ENCODE measurements at regions of chr9 and their contacts with region 1.

Region 1: DNA sequence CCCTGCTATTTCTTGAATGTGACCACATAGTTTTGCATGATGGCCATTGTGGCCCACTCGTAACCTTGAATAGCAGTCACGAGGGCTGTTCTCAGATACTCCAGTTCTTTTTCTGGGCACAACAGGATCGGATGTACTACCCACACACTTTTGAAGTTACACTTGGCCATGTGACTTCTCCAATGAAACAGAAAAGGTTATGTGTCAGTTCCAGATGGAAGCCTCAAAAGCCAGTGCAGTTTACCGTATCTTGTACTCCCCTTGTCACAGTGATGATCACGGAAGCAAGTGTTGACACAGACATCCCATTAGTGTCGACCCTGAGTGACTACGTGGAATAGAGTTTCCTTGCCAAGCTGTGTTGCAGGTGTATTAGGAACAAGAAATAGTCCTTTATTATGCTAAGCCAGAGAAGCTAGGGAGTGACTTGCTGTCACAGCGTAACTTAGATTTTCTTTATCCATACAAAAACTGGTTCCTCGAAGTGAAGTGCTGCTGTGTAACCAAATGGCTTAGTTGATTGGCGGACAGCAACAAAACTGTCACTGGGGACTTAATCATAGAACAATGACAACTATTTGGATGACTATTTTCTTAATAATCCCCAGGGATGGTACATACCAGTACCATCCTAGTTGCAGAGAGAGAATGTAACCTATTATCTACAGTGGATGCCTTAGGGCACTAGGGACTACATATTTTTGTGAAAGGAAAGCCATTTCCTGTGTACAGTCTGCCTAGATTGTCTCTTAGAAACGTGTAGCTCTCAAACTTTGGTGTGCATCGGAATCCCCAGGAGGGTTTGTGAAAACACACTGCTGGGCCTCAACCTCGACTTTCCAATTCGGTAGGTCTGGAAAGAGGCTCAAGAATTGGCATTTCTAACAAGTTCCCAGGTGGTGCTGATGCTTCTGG is 90.1 kb upstream of the DMRT1 start:
- DNase-seq: peak; percentile 56
- H3K4me3 ChIP-seq: no peak overlapping the region
- H3K27ac ChIP-seq: peak overlapping the region; percentile 92
- H3K4me1 ChIP-seq: peaks cover 70% of the 10 kb centered on the region
- H3K27me3 ChIP-seq: no peaks in the 10 kb centered on the region
- CTCF ChIP-seq: no peak

Region 2: DNA sequence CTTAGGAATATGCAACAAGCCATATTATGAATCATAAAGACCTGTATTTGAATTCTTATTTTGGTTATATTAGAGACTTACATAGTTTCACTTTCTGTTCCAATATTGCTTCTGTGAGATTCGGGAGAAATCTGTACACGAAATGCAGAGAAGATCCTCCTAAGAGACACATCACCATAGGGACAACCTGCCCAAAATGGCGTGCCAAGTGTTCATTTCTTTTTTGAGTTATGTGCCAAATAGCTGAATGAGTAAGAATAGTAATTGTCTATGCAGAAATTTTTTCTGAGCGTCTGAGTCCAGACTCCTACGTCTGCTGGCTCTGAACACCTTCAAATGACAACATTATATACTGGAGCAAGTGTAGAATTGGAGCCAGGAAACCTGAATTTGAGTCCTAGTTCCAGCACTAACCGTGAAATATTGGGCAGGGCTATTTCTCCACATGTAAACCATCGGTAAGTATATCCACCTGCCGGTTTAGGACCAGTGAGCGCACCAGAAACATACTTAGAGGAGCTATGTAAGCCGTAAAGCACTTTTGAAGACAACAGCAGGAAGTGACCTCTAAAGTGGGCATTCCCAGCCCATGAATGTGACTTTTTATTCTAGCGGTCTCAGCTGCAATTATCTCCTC is 73.8 kb before region 1 on chr9:
- CTCF ChIA-PET with region 1: no interaction called
- dilution Hi-C with region 1: no loop called
- in situ Hi-C with region 1: no loop called
- intact Hi-C with region 1: loop called (anchors 2 kb)
- DNase-seq: no peak
- H3K4me3 ChIP-seq: peak overlapping the region; percentile 2 to 48 (median 43)
- H3K27ac ChIP-seq: peak overlapping the region; percentile 96
- H3K4me1 ChIP-seq: peaks cover 62% of the 10 kb centered on the region
- H3K27me3 ChIP-seq: no peaks in the 10 kb centered on the region
- CTCF ChIP-seq: no peak

Region 3: DNA sequence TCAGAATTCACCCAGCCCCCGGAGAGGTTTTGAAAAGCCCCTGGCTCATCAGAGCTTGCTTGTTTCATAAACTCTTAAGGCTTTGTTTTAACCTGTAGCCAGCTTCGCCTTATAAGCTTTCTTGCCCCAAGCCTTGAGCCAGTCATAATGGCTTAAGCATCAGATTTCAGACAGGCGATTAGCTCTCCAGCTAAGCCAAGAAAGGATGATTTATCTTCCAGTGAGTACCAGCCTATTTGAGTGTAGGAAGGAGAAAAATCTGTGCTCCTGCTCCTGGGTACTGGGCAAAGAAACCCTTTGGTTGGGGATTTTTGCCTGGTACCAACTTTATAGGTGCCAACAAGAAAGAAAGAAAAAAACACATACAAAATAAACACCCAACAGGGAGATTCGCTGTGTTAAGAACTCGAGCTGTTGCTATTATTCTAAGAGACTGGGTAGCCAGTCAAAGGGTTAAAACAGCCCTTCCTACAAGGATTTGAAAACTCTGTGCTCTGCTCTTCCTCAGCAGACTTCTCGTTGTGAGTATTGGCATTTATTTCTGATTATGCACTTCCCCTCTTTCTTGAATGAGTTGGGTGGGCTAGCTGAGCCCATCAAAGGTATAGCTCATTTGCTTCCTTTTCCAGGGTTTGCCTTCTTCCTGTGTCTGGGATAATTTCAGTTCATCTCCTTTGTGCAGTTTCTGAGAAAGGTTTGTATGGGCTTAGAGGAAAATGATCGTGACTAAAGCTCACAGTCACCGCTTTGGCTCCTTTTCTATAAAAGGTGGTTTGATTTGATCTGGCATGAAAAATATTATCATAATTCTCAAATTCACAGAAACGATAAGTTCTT is 67.1 kb before region 1 on chr9:
- CTCF ChIA-PET with region 1: interaction called, 7 read pairs
- dilution Hi-C with region 1: no loop called
- in situ Hi-C with region 1: no loop called
- intact Hi-C with region 1: loop called (anchors 2 kb)
- DNase-seq: peak; percentile 88
- H3K4me3 ChIP-seq: peak overlapping the region; percentile 52 to 60 (median 59)
- H3K27ac ChIP-seq: peak overlapping the region; percentile 99
- H3K4me1 ChIP-seq: peaks cover 59% of the 10 kb centered on the region
- H3K27me3 ChIP-seq: no peaks in the 10 kb centered on the region
- CTCF ChIP-seq: no peak

Region 4: GRCh38 chr9:693201-694091 is 57.9 kb before region 1 on chr9:
- CTCF ChIA-PET with region 1: no interaction called
- dilution Hi-C with region 1: no loop called
- in situ Hi-C with region 1: loop called in 1 of 2 experiments (anchors 10 kb)
- intact Hi-C with region 1: loop called (anchors 2 kb)
- DNase-seq: no peak
- H3K4me3 ChIP-seq: peak overlapping the region in 1 of 3 experiments; percentile 8
- H3K27ac ChIP-seq: peak overlapping the region; percentile 90
- H3K4me1 ChIP-seq: peaks cover 71% of the 10 kb centered on the region
- H3K27me3 ChIP-seq: no peaks in the 10 kb centered on the region
- CTCF ChIP-seq: no peak

Region 5: GRCh38 chr9:706606-707459 is 44.6 kb before region 1 on chr9:
- CTCF ChIA-PET with region 1: no interaction called
- dilution Hi-C with region 1: no loop called
- in situ Hi-C with region 1: no loop called
- intact Hi-C with region 1: loop called (anchors 5 kb)
- DNase-seq: peak; percentile 83
- H3K4me3 ChIP-seq: peak overlapping the region; percentile 48 to 57 (median 50)
- H3K27ac ChIP-seq: peak overlapping the region; percentile 90
- H3K4me1 ChIP-seq: peaks cover 20% of the 10 kb centered on the region
- H3K27me3 ChIP-seq: no peaks in the 10 kb centered on the region
- CTCF ChIP-seq: no peak

Region 6: GRCh38 chr9:738209-738915 is 13.0 kb before region 1 on chr9:
- CTCF ChIA-PET with region 1: no interaction called
- dilution Hi-C with region 1: no loop called
- in situ Hi-C with region 1: no loop called
- intact Hi-C with region 1: loop called (anchors 2 kb)
- DNase-seq: peak; percentile 94
- H3K4me3 ChIP-seq: no peak overlapping the region
- H3K27ac ChIP-seq: peak overlapping the region; percentile 84
- H3K4me1 ChIP-seq: peaks cover 34% of the 10 kb centered on the region
- H3K27me3 ChIP-seq: no peaks in the 10 kb centered on the region
- CTCF ChIP-seq: no peak

Region 7: DNA sequence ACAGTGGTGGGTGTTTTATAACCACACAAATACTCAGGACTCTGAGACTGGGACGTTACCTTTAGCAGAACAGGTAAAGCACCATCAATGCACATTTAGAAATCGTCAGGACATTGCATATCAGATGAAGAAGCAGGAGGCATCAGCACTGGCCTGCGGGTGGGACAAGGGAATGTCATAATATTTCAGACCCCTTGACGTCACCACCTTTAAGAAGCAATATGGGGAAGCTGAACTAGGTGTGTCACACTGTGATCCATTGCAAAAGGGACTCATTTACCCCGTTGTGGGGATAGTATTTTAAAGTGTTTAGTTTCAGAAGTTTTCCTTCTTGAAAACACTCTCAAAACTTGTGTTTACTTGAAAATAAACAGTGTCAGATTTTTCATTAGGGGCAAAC is 114.8 kb after region 1 on chr9:
- CTCF ChIA-PET with region 1: no interaction called
- dilution Hi-C with region 1: no loop called
- in situ Hi-C with region 1: no loop called
- intact Hi-C with region 1: no loop called
- DNase-seq: no peak
- H3K4me3 ChIP-seq: no peak overlapping the region
- H3K27ac ChIP-seq: no peak overlapping the region
- H3K4me1 ChIP-seq: no peaks in the 10 kb centered on the region
- H3K27me3 ChIP-seq: peaks cover 3% of the 10 kb centered on the region
- CTCF ChIP-seq: no peak